Adrenal gland (tissue), 19 donors: ENCODE measurements at regions of chr1 and their contacts with region 1.

Region 1: GRCh38 chr1:38873027-38873969 is at the start of gene MYCBP:
- DNase-seq: peak; percentile 96 to 97 (median 96)
- H3K4me3 ChIP-seq: peak within 1 kb of the TSS; percentile 53 to 92 (median 78)
- H3K27ac ChIP-seq: peak within 1 kb of the TSS in 2 of 5 donors; percentile 45 to 71
- H3K4me1 ChIP-seq: peaks cover 11 to 18% of the 10 kb centered on the region in 2 donors
- H3K27me3 ChIP-seq: no peaks in the 10 kb centered on the region
- CTCF ChIP-seq: peak; percentile 11 to 48 (median 23)
- POLR2A ChIP-seq: peak in 1 of 2 donors; percentile 40
- total RNA-seq, gene MYCBP: 6.8 to 97.3 (median 18.5) TPM

Region 2: DNA sequence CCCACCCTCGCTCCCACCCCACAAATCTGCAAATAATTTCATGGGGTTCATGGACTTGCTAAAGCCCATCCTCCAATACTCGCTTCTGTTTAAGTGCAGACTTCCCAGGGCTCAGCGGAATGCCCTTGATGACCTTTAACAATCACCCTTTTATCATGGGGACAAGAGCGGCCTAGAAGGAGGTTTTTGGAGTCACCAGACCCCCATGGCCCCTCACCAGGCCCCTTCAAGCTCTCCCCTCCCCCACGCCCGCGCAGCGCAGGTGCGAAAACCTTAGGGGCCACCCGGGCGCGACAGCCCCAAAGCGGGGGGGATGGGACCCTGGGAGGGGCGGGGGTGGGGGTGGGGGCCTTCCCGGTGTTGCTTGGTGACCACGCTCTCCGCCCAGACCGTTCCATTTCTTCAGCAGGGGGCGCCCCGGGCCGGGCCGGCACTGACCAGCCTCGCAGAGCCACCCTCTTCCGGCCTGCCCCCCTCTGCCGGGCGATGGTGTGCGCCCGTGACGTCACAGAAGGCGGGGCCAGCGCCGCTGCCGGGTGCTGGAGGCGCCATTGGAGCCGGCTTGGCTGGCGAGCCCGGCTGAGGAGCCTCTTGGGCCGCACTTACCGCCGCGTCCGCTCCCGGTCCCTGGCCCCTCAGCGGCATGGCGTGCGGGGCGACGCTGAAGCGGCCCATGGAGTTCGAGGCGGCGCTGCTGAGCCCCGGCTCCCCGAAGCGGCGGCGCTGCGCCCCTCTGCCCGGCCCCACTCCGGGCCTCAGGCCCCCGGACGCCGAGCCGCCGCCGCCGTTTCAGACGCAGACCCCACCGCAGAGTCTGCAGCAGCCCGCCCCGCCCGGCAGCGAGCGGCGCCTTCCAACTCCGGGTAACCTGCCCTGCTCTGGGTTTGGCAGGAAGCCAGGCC is 117.7 kb after region 1 on chr1 and contains the start of gene AKIRIN1:
- intact Hi-C with region 1: loop called in 1 of 2 experiments (anchors 5 kb)
- DNase-seq: peak; percentile 98 to 100 (median 99)
- H3K4me3 ChIP-seq: peak within 1 kb of the TSS; percentile 20 to 87 (median 69)
- H3K27ac ChIP-seq: peak within 1 kb of the TSS; percentile 69 to 95 (median 90)
- H3K4me1 ChIP-seq: peaks cover 15 to 24% of the 10 kb centered on the region in 2 donors
- H3K27me3 ChIP-seq: no peaks in the 10 kb centered on the region
- CTCF ChIP-seq: peak in 3 of 6 experiments; percentile 17 to 35 (median 25)
- POLR2A ChIP-seq: peak; percentile 86 to 95
- total RNA-seq, gene AKIRIN1: 25.8 to 71.3 (median 42.9) TPM

Region 3: GRCh38 chr1:39081266-39082009 is 208.1 kb after region 1 on chr1:
- intact Hi-C with region 1: loop called in 1 of 2 experiments (anchors 10 kb)
- DNase-seq: peak in 1 of 7 donors; percentile 36
- H3K4me3 ChIP-seq: peak overlapping the region in 2 of 4 donors; percentile 40 to 85
- H3K27ac ChIP-seq: peak overlapping the region in 2 of 5 donors; percentile 38 to 73
- H3K4me1 ChIP-seq: peaks cover 10 to 12% of the 10 kb centered on the region in 2 donors
- H3K27me3 ChIP-seq: no peaks in the 10 kb centered on the region
- CTCF ChIP-seq: no peak
- POLR2A ChIP-seq: no peak